GM18951 (cell line): ENCODE measurements at regions of chr5 and their contacts with region 1.

Region 1: GRCh38 chr5:171418316-171418981 is 998 bp upstream of the FGF18 start:
- POLR2A ChIP-seq: no peak

Region 2: GRCh38 chr5:171907725-171908343 is 489.4 kb after region 1 on chr5:
- in situ Hi-C with region 1: loop called (anchors 10 kb)
- POLR2A ChIP-seq: no peak

Region 3: DNA sequence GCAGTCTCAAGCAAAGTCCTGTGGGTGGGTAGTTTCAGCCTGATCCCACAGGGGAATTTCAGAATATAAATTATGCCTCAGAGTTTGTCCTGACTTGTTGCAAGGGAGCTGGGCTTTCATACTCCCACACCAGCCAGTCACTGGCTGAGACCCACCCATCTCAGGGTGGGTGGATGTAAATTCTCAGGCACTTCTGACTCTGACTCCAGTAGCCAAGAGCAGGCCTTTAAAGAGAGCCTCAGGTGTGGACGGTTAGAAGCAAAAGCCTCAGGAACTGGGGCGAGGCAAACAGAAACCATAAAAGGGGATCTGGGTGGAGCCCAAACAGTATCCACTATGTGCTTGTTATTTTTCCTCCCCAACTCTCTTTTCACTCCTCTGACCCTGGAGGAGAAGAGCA is 616.6 kb after region 1 on chr5:
- in situ Hi-C with region 1: loop called (anchors 25 kb)
- POLR2A ChIP-seq: no peak